Right ventricle myocardium inferior (tissue), 1 donor: ENCODE measurements at regions of chr16 and their contacts with region 1.

Region 1: GRCh38 chr16:10731790-10732189 is 11.9 kb upstream of the NUBP1 start:
- DNase-seq: no peak
- ATAC-seq: peak; percentile 54

Region 2: GRCh38 chr16:10136916-10137315 is 594.9 kb before region 1 on chr16:
- intact Hi-C with region 1: no loop called
- DNase-seq: no peak
- ATAC-seq: no peak

Region 3: GRCh38 chr16:10754941-10755340 is 23.2 kb after region 1 on chr16:
- intact Hi-C with region 1: loop called (anchors 2 kb)
- DNase-seq: no peak
- ATAC-seq: no peak

Region 4: DNA sequence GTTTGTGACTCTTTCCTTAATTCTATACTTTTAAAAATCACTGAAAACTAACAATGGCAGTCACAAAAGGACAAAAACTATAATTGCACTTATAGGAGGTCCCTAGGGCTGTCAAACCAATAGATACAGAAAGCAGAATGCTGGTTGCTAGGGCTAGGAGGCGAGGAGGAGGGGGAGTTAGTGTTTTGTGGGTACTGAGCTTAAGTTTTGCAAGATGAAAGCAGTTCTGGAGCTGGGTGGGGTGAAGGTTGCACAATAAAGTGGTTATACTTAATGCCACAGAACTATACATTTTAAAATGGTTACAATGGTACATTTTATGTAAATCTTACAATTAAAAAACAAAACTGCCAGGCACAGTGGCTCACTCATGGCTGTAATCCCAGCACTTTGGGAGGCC is 39.1 kb after region 1 on chr16:
- intact Hi-C with region 1: no loop called
- DNase-seq: no peak
- ATAC-seq: no peak